OCI-LY7 (cell line): ENCODE measurements at regions of chrX and their contacts with region 1.

Region 1: GRCh38 chrX:49100704-49101628 is 21.3 kb upstream of the WDR45 start:
- DNase-seq: peak; percentile 93
- H3K4me3 ChIP-seq: peak overlapping the region; percentile 85
- H3K27ac ChIP-seq: peak overlapping the region; percentile 85
- H3K4me1 ChIP-seq: peaks cover 15% of the 10 kb centered on the region
- CTCF ChIP-seq: no peak

Region 2: GRCh38 chrX:49079489-49080428 is 21.2 kb before region 1 on chrX and contains the start of gene WDR45:
- CTCF ChIA-PET with region 1: no interaction called
- POLR2A ChIA-PET with region 1: interaction called, 10 read pairs
- intact Hi-C with region 1: no loop called
- DNase-seq: peak; percentile 64
- H3K4me3 ChIP-seq: peak within 1 kb of the TSS; percentile 80
- H3K27ac ChIP-seq: peak within 1 kb of the TSS; percentile 54
- H3K4me1 ChIP-seq: peaks cover 4% of the 10 kb centered on the region
- CTCF ChIP-seq: no peak
- total RNA-seq, gene WDR45: 32.4 and 37.6 TPM in 2 replicates